Mammary epithelial cell (primary cell): ENCODE measurements at regions of chr2 and their contacts with region 1.

Region 1: GRCh38 chr2:237500681-237501424 is 13.8 kb downstream of the MLPH start:
- DNase-seq: peak; percentile 77
- H3K4me3 ChIP-seq: no peak overlapping the region
- H3K27ac ChIP-seq: no peak overlapping the region
- H3K4me1 ChIP-seq: peaks cover 6% of the 10 kb centered on the region
- H3K27me3 ChIP-seq: no peaks in the 10 kb centered on the region
- CTCF ChIP-seq: no peak

Region 2: DNA sequence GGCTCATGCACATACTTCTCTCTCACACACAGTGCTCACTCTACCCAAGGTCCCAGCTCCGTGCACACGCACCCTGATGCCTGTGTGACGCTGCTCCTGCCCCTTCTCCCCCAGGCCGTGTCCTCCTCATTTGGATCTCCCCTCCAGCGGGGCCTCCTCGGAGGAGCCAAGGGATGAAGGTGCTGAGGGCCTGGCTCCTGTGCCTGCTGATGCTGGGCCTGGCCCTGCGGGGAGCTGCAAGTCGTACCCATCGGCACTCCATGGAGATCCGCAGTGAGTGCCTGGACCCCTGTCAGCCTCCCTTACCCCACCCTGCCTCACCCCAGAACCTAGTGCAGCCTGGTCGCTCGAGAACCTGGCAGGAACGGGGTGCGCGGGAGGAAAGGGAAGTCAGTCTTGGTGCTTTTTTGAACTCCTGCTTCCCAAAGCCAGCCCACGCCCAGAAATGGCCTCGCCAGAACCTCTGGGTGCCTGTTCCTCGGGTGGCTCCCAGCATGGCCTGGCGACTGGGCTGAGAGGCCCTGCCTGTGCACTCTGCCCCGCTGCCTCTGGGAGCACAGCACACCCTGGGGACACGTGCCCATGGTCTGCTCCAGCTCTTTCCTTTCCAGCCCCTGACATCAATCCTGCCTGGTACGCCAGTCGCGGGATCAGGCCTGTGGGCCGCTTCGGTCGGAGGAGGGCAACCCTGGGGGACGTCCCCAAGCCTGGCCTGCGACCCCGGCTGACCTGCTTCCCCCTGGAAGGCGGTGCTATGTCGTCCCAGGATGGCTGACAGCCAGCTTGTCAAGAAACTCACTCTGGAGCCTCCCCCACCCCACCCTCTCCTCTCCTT is 65.8 kb after region 1 on chr2 and contains the start of gene PRLH:
- CTCF ChIA-PET with region 1: no interaction called
- dilution Hi-C with region 1: loop called (anchors 5 kb)
- in situ Hi-C with region 1: no loop called
- intact Hi-C with region 1: no loop called
- DNase-seq: no peak
- H3K4me3 ChIP-seq: no peak within 1 kb of the TSS
- H3K27ac ChIP-seq: no peak within 1 kb of the TSS
- H3K4me1 ChIP-seq: no peaks in the 10 kb centered on the region
- H3K27me3 ChIP-seq: no peaks in the 10 kb centered on the region
- CTCF ChIP-seq: no peak
- total RNA-seq, gene PRLH: not detected